ENCODE measurements at regions of chr22 and their contacts with region 1.

Region 1: DNA sequence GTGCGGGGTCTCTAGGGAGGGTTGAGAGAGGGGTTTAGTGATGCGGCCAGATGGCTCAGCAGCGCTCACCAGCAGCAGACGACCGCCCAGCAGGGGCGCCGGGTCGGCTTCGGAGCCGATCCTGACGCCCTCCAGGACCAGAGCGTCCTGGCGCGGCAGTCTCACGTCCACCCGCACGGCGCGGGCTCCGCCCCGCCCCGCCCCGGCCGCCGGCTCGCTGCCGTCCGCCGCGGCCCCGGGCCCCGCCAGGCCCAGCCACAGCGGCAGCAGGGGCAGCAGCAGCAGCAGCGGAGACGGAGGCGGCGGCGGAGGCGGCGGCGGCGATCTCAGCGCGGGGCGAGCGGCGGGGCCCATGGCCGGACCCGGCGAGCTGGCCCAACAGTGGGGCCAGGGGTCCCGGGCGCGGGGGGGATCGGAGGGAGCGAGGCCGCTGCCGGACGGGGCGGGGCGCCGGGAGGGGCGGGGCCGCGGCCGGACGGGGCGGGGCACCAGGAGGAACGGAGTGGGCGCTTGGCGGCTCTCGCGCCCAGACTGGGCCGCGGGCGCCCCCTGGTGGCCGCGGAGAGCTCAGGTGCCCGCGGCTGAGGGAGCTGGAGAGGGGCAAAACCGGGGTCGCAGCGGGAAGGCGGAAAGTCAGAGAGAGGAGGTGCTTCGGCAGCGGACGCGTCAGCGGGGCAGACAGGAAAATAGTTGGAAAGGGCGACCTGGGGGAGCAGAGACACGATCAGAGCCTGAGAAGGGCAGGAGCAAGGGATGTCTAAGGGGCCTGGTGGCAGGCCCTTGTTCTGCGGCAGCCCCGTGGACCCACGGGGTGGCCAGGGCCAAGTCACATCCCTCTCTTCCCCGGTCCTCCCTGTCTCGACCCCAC is at the start of gene RNF215:
- DNase-seq: peak; percentile 82 to 93 (median 91)
- ATAC-seq: peak; percentile 88
- H3K4me3 ChIP-seq: peak within 1 kb of the TSS; percentile 48
- H3K27ac ChIP-seq: no peak within 1 kb of the TSS
- H3K4me1 ChIP-seq: peaks cover 12 to 25% of the 10 kb centered on the region in 2 experiments; a peak in 4 of 5 replicates
- H3K27me3 ChIP-seq: no peaks in the 10 kb centered on the region
- CTCF ChIP-seq: peak; percentile 69 to 87 (median 73)
- EP300 ChIP-seq: no peak
- POLR2A ChIP-seq: no peak
- RAD21 ChIP-seq: peak; percentile 66 to 75
- polyA plus RNA-seq, gene RNF215: 0.08 to 0.10 TPM

Region 2: DNA sequence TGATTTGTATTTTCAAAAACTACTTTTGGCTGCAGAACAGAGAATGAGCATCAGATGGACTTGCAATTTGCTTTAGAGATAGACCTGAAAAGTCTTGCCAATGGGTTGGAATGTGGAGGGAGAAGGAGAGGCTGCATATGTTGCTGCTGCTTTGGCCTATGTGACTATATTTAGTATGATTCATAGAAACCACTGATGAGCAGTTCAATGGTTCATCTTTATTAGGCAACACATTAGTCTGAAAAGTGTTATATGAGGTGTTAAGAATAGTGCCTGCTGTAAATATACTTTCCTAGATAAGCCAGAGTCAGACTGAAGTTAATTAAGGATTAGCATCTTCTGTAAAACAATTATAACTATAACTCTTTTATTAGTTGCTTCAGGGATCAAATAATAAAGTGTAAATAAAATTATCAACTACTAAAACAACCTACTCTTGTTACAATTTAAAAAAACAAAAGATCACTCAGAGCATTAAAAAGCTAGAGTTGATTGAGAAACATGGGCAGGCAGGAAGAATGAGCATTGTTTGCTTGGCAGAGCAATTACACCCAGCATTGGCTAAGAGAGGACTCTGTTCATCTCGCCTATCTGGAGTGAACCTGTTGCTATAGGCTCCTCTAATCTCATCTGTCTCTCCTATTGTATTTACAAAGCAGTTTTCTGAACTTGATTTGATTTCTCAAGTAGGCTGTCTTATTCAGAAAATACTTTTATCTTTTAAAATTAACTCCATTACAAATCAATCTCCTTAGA is 270.7 kb before region 1 on chr22:
- CTCF ChIA-PET with region 1: no interaction called
- POLR2A ChIA-PET with region 1: no interaction called
- in situ Hi-C with region 1: loop called (anchors 25 kb)
- intact Hi-C with region 1: no loop called
- DNase-seq: no peak
- ATAC-seq: no peak
- H3K4me3 ChIP-seq: no peak overlapping the region
- H3K27ac ChIP-seq: no peak overlapping the region
- H3K4me1 ChIP-seq: no peaks in the 10 kb centered on the region
- H3K27me3 ChIP-seq: peaks cover 0 to 6% of the 10 kb centered on the region in 2 experiments; a peak in 2 of 5 replicates
- CTCF ChIP-seq: no peak
- EP300 ChIP-seq: no peak
- POLR2A ChIP-seq: no peak
- RAD21 ChIP-seq: no peak

Region 3: GRCh38 chr22:30289134-30289979 is 97.8 kb before region 1 on chr22 and contains the start of gene CASTOR1:
- CTCF ChIA-PET with region 1: interaction called, 31 read pairs
- POLR2A ChIA-PET with region 1: no interaction called
- in situ Hi-C with region 1: no loop called
- intact Hi-C with region 1: loop called (anchors 1 kb)
- DNase-seq: peak; percentile 96 to 98 (median 98)
- ATAC-seq: peak; percentile 91
- H3K4me3 ChIP-seq: peak within 1 kb of the TSS; percentile 58
- H3K27ac ChIP-seq: 0 out of 3 replicates have a peak within 1 kb of the TSS, but pooled peaks have one; percentile 15
- H3K4me1 ChIP-seq: peaks cover 19 to 60% of the 10 kb centered on the region in 2 experiments; a peak in 4 of 5 replicates
- H3K27me3 ChIP-seq: no peaks in the 10 kb centered on the region
- CTCF ChIP-seq: no peak
- EP300 ChIP-seq: no peak
- POLR2A ChIP-seq: no peak
- RAD21 ChIP-seq: no peak
- polyA plus RNA-seq, gene CASTOR1: 0.35 to 0.56 TPM

Region 4: DNA sequence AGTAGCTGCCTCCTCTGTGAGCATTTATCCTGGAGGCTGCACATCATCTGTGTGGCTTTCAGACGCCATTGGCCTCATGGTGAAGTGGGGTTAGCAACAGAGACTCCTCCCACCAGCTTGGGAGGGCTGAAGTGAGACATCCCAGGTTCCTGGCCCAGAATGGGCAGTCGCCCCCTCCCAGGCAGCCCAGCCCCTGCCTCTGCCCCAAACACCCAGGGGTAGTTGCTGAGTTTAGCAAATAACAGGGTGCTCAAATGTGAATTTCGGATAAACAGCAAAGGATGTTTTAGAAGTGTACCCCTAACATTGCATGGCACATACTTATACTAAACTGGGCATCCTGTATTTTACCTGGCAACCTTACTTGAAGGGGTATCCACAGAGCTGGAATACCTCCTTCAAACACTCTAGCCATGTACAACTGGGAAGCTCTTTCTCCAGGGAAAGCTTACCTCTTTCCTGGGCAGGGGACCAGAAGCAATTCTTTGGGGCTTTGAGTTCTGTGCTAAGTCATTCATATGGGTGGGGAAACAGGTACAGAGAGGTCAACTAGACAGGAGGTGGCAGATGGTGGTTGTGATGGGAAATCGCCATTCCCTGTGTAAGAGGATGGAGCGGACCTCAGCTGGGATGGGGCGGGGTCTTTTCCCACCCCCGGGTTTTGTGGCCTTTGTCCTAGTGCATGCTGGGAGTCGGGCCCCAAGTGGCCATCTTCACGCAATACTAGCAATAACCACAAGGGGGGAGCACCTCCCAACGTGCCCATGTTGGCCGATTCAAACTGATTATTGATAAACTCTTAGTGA is 57.6 kb after region 1 on chr22:
- CTCF ChIA-PET with region 1: no interaction called
- POLR2A ChIA-PET with region 1: interaction called, 4 read pairs
- in situ Hi-C with region 1: no loop called
- intact Hi-C with region 1: loop called (anchors 5 kb)
- DNase-seq: peak; percentile 77 to 84 (median 80)
- ATAC-seq: peak; percentile 86
- H3K4me3 ChIP-seq: no peak overlapping the region
- H3K27ac ChIP-seq: peak overlapping the region; percentile 55
- H3K4me1 ChIP-seq: peaks cover 32 to 33% of the 10 kb centered on the region in 2 experiments; a peak in 4 of 5 replicates
- H3K27me3 ChIP-seq: no peaks in the 10 kb centered on the region
- CTCF ChIP-seq: peak; percentile 79 to 84 (median 83)
- EP300 ChIP-seq: no peak
- POLR2A ChIP-seq: peak; percentile 81
- RAD21 ChIP-seq: peak; percentile 40 to 72

Region 5: DNA sequence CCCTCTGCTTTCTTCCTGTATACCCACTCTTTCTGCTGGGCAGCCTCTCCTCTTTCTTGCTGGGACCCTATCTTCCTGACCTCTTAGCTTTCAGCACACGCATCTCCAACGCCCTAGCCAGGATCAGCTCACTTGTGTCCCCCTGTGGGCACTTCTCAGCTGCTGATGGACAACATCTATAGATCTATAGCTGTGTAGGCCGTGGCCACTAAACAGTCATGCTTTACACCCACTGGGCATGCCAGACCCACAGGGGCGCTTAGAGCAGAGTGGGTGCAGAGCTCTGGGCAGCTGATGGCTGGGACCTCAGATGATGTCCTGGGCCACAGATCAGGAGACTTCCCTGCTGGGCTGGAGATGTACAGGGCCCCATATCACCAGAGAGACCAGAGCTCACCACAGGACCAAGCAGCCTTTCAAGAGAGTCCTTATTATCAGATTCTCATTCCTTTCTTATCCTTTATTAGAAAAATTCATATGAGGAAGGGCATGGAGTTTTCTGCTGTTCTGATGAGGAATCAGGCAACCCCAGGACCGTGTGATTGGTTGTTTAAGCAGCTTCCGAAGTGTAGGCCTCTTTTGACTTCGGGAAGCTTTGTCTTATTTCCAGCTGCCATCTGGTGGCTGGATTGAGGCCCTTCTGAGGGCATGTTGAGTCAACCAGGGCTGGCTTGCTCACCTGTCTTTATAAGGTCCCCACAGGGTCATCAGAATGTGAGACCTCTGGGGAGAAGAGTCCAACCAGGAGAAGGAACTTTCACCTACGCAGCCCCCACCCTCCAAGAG is 368.0 kb after region 1 on chr22:
- CTCF ChIA-PET with region 1: interaction called, 3 read pairs
- POLR2A ChIA-PET with region 1: no interaction called
- in situ Hi-C with region 1: loop called (anchors 10 kb)
- intact Hi-C with region 1: loop called (anchors 5 kb)
- DNase-seq: peak; percentile 54 to 78 (median 62)
- ATAC-seq: peak; percentile 95
- H3K4me3 ChIP-seq: no peak overlapping the region
- H3K27ac ChIP-seq: no peak overlapping the region
- H3K4me1 ChIP-seq: no peaks in the 10 kb centered on the region; a peak in 1 of 5 replicates
- H3K27me3 ChIP-seq: no peaks in the 10 kb centered on the region; a peak in 1 of 5 replicates
- CTCF ChIP-seq: peak; percentile 66 to 81 (median 76)
- EP300 ChIP-seq: no peak
- POLR2A ChIP-seq: no peak
- RAD21 ChIP-seq: peak; percentile 82 to 92

Measured in K562 (cell line).